Colonic mucosa (tissue), 4 donors: ENCODE measurements at regions of chr3 and their contacts with region 1.

Region 1: DNA sequence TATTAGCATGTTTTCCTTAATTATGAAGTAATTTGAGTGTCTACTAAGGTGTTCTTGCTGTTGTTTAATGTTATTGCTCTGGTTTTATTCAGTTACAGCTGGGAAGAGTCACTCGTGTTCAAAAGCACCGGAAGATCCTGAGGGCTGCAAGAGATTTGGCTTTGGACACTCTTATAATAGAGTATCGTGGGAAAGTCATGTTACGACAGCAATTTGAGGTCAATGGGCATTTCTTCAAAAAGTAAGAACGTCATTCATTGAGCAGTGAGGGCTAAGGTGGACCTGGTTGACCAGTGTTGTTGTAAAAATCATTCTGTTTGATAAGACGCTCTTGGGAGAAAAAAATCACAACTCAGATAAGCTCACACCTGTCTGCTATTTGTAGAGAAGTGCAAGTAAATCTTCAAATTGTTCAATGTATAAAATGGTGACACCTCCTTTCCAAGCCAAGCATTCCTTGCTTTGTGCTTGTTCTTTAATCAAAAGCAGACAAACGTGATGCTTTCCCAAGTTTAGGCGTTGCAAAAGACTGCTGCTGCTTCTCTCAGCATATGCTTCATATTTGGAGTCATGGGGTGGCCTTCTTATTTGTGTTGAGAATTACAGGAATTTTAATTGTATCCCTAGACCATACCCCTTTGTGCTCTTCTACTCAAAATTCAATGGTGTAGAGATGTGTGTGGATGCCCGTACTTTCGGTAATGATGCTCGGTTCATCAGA is 44.2 kb downstream of the SETD5 start:
- DNase-seq: no peak
- H3K4me3 ChIP-seq: no peak overlapping the region
- H3K27ac ChIP-seq: no peak overlapping the region
- H3K4me1 ChIP-seq: no peaks in the 10 kb centered on the region
- H3K27me3 ChIP-seq: no peaks in the 10 kb centered on the region
- CTCF ChIP-seq: no peak

Region 2: GRCh38 chr3:9387322-9387655 is 54.4 kb before region 1 on chr3:
- intact Hi-C with region 1: loop called (anchors 5 kb)
- DNase-seq: no peak
- H3K4me3 ChIP-seq: no peak overlapping the region
- H3K27ac ChIP-seq: no peak overlapping the region
- H3K4me1 ChIP-seq: peaks cover 3% of the 10 kb centered on the region
- H3K27me3 ChIP-seq: no peaks in the 10 kb centered on the region
- CTCF ChIP-seq: no peak